PC-9 (cell line): ENCODE measurements at regions of chr11 and their contacts with region 1.

Region 1: DNA sequence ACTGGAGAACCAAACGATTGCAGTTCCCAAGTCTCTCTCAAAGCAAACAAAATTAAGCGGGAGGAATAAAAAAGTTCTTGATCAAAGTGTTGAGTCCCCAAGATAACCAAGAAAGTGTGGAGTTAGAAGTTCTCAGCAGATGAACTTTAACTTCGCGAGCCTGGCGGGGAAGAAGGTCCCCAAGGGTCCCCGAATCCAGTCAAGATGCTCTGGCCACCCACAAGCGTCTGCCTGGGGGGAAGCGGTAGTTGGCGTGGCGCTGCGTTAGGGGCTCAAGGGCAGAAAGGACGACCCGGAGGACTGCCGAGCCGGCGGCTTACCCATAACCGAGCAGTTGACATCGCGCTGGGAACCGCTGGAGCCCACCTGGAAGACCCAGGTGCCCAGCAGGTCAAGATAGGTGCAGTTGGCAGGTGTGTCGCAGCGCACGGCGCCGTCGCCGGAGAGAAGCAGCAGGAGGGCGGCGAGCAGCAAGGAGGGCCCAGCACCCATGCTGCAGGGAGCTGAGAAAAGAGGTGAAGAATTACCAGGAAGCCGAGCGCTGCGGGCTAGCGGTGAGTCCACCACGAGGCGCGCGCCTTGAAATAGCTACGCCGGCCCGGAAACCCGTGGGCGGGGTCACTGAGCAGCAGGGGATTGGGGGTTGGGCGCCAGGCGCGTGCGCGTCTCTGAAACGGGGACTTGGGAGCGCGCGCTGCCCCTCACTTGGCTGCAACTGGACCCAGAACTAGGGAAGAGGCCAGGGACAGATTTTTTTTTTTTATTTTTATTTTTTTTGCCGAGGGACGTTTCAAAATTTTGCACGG is at the start of gene CTSC:
- DNase-seq: peak; percentile 89 to 91
- H3K4me3 ChIP-seq: peak within 1 kb of the TSS; percentile 87
- H3K27ac ChIP-seq: peak within 1 kb of the TSS; percentile 73
- H3K4me1 ChIP-seq: peaks cover 37% of the 10 kb centered on the region
- H3K27me3 ChIP-seq: no peaks in the 10 kb centered on the region
- CTCF ChIP-seq: no peak; the same call in 1 of the 2 replicates
- total RNA-seq, gene CTSC: 119 and 124 TPM in 2 replicates

Region 2: DNA sequence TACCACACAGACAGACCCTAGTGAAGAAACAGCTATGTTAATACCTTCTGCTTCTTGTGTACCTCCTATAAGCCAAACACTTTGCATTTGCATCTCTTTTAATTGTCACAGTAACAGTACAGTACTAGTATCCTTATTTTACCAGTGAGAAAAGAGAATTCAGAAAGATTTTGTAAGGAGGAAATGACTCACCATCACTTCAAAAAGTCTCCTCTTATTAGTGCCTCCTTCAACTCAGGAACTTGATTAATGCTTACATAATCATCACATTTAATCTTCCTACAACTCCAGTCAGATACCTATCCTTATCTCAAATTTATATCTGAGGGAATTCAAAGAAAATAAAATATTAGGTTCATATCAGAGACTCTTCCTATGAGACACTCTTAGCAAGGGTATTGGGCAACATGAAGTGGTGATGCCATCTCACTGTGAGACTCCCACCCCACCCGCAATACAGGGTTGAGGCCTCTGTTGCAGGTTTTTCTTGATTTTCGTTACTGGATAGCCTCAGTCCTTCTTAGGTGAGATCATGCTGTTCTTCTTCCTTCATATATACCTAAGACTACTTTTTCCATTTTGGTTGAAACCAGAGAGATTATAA is 26.3 kb after region 1 on chr11:
- CTCF ChIA-PET with region 1: no interaction called
- POLR2A ChIA-PET with region 1: interaction called, 16 read pairs
- intact Hi-C with region 1: no loop called
- DNase-seq: peak; percentile 27 to 66
- H3K4me3 ChIP-seq: no peak overlapping the region
- H3K27ac ChIP-seq: peak overlapping the region; percentile 39
- H3K4me1 ChIP-seq: peaks cover 14% of the 10 kb centered on the region
- H3K27me3 ChIP-seq: no peaks in the 10 kb centered on the region
- CTCF ChIP-seq: no peak

Region 3: GRCh38 chr11:88402192-88402715 is 64.9 kb after region 1 on chr11:
- CTCF ChIA-PET with region 1: no interaction called
- POLR2A ChIA-PET with region 1: no interaction called
- intact Hi-C with region 1: loop called (anchors 5 kb)
- DNase-seq: peak in 1 of 2 experiments; percentile 98
- H3K4me3 ChIP-seq: no peak overlapping the region
- H3K27ac ChIP-seq: peak overlapping the region; percentile 85
- H3K4me1 ChIP-seq: peaks cover 55% of the 10 kb centered on the region
- H3K27me3 ChIP-seq: no peaks in the 10 kb centered on the region
- CTCF ChIP-seq: no peak

Region 4: DNA sequence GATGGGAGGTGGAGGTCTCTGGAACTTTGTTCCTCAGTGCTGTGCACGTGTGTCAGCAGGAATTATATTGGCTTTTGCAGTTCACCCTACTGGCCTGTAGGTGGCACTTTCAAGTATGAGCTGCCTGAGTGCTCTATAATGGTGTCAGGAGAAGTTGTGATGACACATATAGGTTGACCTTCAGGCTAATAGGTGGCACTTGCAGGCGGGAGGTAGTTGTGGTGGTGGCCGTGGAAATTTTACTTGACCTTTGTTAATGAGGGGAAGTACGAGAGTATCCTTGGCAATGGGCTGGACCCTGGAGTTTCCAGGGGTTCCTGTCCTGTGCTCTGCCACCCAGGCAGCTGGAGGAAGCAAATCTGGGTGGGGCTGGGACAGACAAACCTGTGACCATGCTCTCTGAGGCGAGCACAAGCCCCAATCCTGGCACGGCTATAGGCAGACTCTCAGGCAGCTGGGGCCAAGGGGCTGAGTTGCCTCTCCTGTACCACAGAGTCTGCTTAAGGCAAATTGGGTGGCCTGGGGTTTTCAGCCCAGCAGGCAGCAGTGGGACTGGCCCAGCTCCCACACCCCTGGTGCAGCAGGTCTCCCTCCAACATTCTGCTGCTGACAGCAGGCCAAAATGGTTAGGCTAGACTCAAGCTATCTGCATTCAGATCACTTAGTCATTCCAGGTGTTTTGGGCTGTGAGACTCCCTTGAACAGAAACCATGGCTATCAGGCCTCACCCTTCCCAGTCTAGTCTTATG is 147.7 kb after region 1 on chr11:
- CTCF ChIA-PET with region 1: no interaction called
- POLR2A ChIA-PET with region 1: no interaction called
- intact Hi-C with region 1: loop called (anchors 5 kb)
- DNase-seq: peak; percentile 49 to 63
- H3K4me3 ChIP-seq: no peak overlapping the region
- H3K27ac ChIP-seq: no peak overlapping the region
- H3K4me1 ChIP-seq: no peaks in the 10 kb centered on the region
- H3K27me3 ChIP-seq: no peaks in the 10 kb centered on the region
- CTCF ChIP-seq: peak; percentile 90

Region 5: DNA sequence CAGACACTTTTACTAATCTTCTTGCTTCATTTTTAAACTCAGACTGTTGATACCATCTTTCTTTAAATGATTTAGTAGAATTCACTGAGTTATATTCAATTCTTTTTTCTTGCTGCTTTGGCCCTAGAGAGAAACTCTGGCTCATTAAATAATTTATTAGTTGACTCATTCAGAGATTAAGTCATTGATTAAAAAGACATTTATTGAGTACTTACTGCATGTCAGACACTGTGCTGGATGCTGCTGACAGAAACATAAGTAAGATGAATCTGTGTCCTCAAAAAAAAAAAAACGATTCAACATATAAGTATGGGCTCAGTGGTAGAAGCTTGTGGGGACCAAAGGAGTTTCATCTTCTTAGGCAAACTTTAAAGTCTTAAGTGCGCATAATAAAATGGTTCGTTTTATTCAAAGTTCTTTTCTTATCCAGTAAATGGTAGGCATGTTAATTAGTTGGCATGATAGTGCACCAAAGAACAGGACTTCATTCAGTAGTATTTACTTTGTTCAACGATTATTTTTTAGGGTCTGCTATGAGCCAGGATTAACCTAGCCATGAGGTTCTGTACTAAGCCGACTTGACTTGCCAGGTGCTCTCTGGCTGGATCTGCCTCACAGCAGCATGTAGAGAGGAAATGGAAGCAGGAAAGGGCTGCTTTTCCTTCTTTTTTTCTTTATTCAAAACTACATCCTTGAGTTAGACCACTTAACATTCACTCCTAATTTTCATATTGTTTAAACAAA is 281.1 kb after region 1 on chr11:
- CTCF ChIA-PET with region 1: no interaction called
- POLR2A ChIA-PET with region 1: no interaction called
- intact Hi-C with region 1: no loop called
- DNase-seq: no peak
- H3K4me3 ChIP-seq: no peak overlapping the region
- H3K27ac ChIP-seq: no peak overlapping the region
- H3K4me1 ChIP-seq: 0 out of 2 replicates have a peak, but pooled peaks cover 6% of the 10 kb centered on the region
- H3K27me3 ChIP-seq: no peaks in the 10 kb centered on the region
- CTCF ChIP-seq: no peak

Region 6: GRCh38 chr11:89249196-89249595 is 911.8 kb after region 1 on chr11:
- CTCF ChIA-PET with region 1: no interaction called
- POLR2A ChIA-PET with region 1: no interaction called
- intact Hi-C with region 1: no loop called
- DNase-seq: no peak
- H3K4me3 ChIP-seq: no peak overlapping the region
- H3K27ac ChIP-seq: no peak overlapping the region
- H3K4me1 ChIP-seq: no peaks in the 10 kb centered on the region
- H3K27me3 ChIP-seq: no peaks in the 10 kb centered on the region
- CTCF ChIP-seq: no peak